ENCODE measurements at regions of chr5 and their contacts with region 1.

Region 1: DNA sequence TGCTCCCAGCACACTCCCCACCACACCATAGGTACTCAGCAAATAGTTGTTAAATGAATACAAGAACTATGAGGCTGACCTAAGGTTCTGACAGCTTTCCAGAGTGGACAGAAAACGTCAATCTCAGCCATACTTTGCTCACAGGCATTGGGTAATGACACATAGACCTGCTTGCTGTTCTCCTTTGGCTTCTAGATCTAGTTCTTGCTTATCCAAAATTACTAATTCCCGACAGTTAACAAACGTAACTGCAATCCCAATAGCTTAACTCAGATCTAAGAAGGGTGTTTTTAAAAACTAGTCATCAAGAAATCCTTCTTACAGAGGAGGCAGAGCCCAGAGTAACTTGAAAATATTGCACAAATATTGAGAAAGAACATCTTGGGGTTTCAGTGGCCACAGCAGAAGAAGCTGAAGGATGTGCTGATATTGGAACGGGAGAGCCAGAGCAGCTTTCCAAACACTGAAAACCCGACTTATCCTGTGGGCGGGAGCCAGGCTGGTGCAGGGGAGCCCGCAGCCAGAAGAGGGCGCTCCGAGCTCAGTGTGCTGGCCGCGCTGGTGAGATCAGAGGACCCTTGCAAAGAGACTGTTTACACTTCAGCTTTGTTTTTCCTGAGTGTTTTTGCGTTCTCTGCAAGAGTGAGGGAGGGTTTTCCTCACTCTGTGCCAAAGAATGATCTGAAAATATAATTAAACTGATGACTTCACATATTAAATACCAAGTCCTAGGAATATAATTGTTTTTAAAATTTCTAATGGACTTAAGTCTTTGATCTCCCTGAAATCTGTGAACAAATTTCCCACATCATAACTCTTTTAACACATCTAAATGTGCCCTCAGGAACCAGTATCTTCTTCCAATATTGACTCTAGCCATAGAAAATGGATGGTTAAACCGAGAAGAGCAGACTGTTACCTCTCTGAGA is 30.3 kb downstream of the FGF1 start:
- DNase-seq: peak; percentile 53 to 74
- ATAC-seq: peak; percentile 81 to 92
- H3K4me3 ChIP-seq: no peak overlapping the region
- H3K27ac ChIP-seq: peak overlapping the region in 3 of 4 donors; percentile 0 to 14 (median 1)
- H3K4me1 ChIP-seq: peaks cover 4 to 20% of the 10 kb centered on the region in 2 donors
- H3K27me3 ChIP-seq: no peaks in the 10 kb centered on the region
- CTCF ChIP-seq: peak; percentile 87 to 98 (median 94)
- POLR2A ChIP-seq: no peak

Region 2: GRCh38 chr5:142453932-142454331 is 201.7 kb before region 1 on chr5:
- in situ Hi-C with region 1: no loop called
- intact Hi-C with region 1: no loop called
- DNase-seq: no peak
- ATAC-seq: peak in 1 of 2 donors; percentile 36
- H3K4me3 ChIP-seq: peak overlapping the region in 1 of 4 donors; percentile 6
- H3K27ac ChIP-seq: peak overlapping the region in 2 of 4 donors; percentile 43 to 52
- H3K4me1 ChIP-seq: no peaks in the 10 kb centered on the region
- H3K27me3 ChIP-seq: no peaks in the 10 kb centered on the region
- CTCF ChIP-seq: no peak
- POLR2A ChIP-seq: no peak

Region 3: GRCh38 chr5:142611154-142611553 is 44.4 kb before region 1 on chr5:
- in situ Hi-C with region 1: no loop called
- intact Hi-C with region 1: loop called (anchors 2 kb)
- DNase-seq: peak; percentile 12 to 44
- ATAC-seq: peak; percentile 58 to 72
- H3K4me3 ChIP-seq: no peak overlapping the region
- H3K27ac ChIP-seq: no peak overlapping the region
- H3K4me1 ChIP-seq: peaks cover 0 to 3% of the 10 kb centered on the region in 2 donors
- H3K27me3 ChIP-seq: no peaks in the 10 kb centered on the region
- CTCF ChIP-seq: peak; percentile 51 to 86 (median 73)
- POLR2A ChIP-seq: no peak

Region 4: GRCh38 chr5:142845402-142845921 is 189.9 kb after region 1 on chr5:
- in situ Hi-C with region 1: no loop called
- intact Hi-C with region 1: no loop called
- DNase-seq: no peak
- ATAC-seq: peak; percentile 23 to 64
- H3K4me3 ChIP-seq: no peak overlapping the region
- H3K27ac ChIP-seq: peak overlapping the region; percentile 0 to 29 (median 9)
- H3K4me1 ChIP-seq: peaks cover 33 to 53% of the 10 kb centered on the region in 2 donors
- H3K27me3 ChIP-seq: no peaks in the 10 kb centered on the region
- CTCF ChIP-seq: no peak
- POLR2A ChIP-seq: no peak

Measured in gastrocnemius medialis (tissue), 4 donors.